Naive thymus-derived CD4-positive, alpha-beta T cell (primary cell): ENCODE measurements at regions of chr6 and their contacts with region 1.

Region 1: GRCh38 chr6:42050266-42051032 is at the start of gene TAF8:
- DNase-seq: peak; percentile 76 to 89 (median 87)
- ATAC-seq: peak; percentile 80
- H3K4me3 ChIP-seq: peak within 1 kb of the TSS; percentile 98
- H3K4me3 Mint-ChIP-seq: peak within 1 kb of the TSS; percentile 89 to 99 (median 99)
- H3K27ac ChIP-seq: peak within 1 kb of the TSS; percentile 78
- H3K27ac Mint-ChIP-seq: peak within 1 kb of the TSS; percentile 93 to 98 (median 97)
- H3K4me1 ChIP-seq: peaks cover 24 to 27% of the 10 kb centered on the region in 2 donors
- H3K4me1 Mint-ChIP-seq: peaks cover 36 to 70% (median 51%) of the 10 kb centered on the region in 7 donors
- H3K27me3 ChIP-seq: no peaks in the 10 kb centered on the region
- H3K27me3 Mint-ChIP-seq: no peaks in the 10 kb centered on the region
- total RNA-seq, gene TAF8: 41.6 to 58.2 (median 50.8) TPM

Region 2: GRCh38 chr6:40907198-40907704 is 1143.2 kb before region 1 on chr6:
- CTCF ChIA-PET with region 1: no interaction called
- POLR2A ChIA-PET with region 1: no interaction called
- intact Hi-C with region 1: no loop called
- DNase-seq: no peak
- ATAC-seq: no peak
- H3K4me3 ChIP-seq: no peak overlapping the region
- H3K4me3 Mint-ChIP-seq: no peak overlapping the region
- H3K27ac ChIP-seq: no peak overlapping the region
- H3K27ac Mint-ChIP-seq: no peak overlapping the region
- H3K4me1 ChIP-seq: no peaks in the 10 kb centered on the region
- H3K4me1 Mint-ChIP-seq: peaks cover 0 to 2% (median 0%) of the 10 kb centered on the region in 7 donors
- H3K27me3 ChIP-seq: no peaks in the 10 kb centered on the region
- H3K27me3 Mint-ChIP-seq: peaks cover 4 to 28% (median 13%) of the 10 kb centered on the region in 5 donors

Region 3: GRCh38 chr6:41895300-41896233 is 154.9 kb before region 1 on chr6 and contains the start of gene USP49:
- CTCF ChIA-PET with region 1: interaction called, 3 read pairs
- POLR2A ChIA-PET with region 1: interaction called, 5 read pairs
- intact Hi-C with region 1: loop called (anchors 1 kb)
- DNase-seq: peak; percentile 83 to 92 (median 90)
- ATAC-seq: peak; percentile 97
- H3K4me3 ChIP-seq: peak within 1 kb of the TSS; percentile 69
- H3K4me3 Mint-ChIP-seq: peak within 1 kb of the TSS in 1 of 10 donors; percentile 94
- H3K27ac ChIP-seq: peak within 1 kb of the TSS; percentile 76
- H3K27ac Mint-ChIP-seq: peak within 1 kb of the TSS in 7 of 9 donors; percentile 78 to 97 (median 93)
- H3K4me1 ChIP-seq: peaks cover 14 to 26% of the 10 kb centered on the region in 2 donors
- H3K4me1 Mint-ChIP-seq: peaks cover 5 to 17% (median 11%) of the 10 kb centered on the region in 7 donors
- H3K27me3 ChIP-seq: no peaks in the 10 kb centered on the region
- H3K27me3 Mint-ChIP-seq: peaks cover 0 to 7% (median 0%) of the 10 kb centered on the region in 5 donors
- total RNA-seq, gene USP49: 1.8 to 6.0 (median 3.1) TPM